ENCODE measurements at regions of chr3 and their contacts with region 1.

Region 1: DNA sequence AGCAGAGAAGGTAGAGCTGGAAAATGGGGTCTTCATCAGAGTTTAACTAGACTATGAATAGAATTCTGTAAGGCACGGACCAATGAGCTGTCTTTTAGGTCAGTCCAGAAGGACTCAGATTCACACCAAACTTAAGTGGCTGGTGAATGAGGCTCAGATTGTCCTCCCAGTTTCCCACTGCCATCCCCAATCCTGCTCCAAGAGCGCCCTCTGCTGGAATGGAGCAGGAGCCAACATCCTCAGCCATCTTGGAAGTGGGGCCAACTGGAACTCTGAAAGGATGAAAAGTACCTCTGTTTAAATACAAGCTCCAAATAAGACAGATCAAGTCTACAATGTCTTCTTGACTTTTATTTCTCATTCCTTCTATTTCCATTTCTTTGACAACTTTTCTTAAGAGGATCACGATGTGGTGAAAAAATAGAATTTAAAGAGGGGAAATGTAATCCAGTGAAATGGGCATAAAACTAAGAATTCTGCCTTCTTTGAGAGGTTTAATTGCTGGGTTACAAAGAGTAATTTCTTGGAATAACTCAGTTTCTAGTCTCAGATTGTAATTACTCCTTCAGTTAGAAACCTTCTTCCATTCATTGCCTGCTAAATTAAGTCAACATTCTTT is 217.1 kb upstream of the TPRG1 start:
- DNase-seq: peak; percentile 85
- ATAC-seq: peak; percentile 79

Region 2: GRCh38 chr3:187739561-187740332 is 1215.0 kb before region 1 on chr3:
- intact Hi-C with region 1: loop called (anchors 2 kb)
- DNase-seq: peak; percentile 89
- ATAC-seq: peak; percentile 21

Region 3: GRCh38 chr3:189148081-189148507 is 193.4 kb after region 1 on chr3:
- intact Hi-C with region 1: loop called (anchors 10 kb)
- DNase-seq: peak; percentile 43
- ATAC-seq: peak; percentile 81